Adrenal gland (tissue), 19 donors: ENCODE measurements at regions of chr18 and their contacts with region 1.

Region 1: DNA sequence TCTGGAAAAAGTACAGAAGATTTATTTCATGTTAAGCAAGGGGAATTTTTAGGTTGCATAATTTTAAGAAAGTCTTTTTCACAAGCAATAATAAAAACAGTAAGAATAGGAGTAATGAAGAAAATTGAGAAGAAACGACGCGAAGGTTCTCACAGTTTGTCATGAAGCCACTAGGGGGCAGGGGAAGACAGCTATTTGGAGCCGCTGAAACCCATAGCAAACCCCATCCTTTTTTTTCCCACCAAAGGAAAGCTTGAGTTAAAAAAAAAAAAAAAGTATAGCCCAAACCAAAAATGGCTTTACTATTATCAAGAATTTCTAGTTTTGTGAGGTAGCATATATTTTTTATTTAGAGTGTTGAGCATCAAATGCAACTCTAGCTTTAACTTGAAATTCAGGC is 300.9 kb downstream of the PHLPP1 start:
- DNase-seq: peak; percentile 34 to 79 (median 44)
- H3K4me3 ChIP-seq: no peak overlapping the region
- H3K27ac ChIP-seq: no peak overlapping the region
- H3K4me1 ChIP-seq: no peaks in the 10 kb centered on the region
- H3K27me3 ChIP-seq: no peaks in the 10 kb centered on the region
- CTCF ChIP-seq: peak; percentile 62 to 86 (median 82)
- POLR2A ChIP-seq: no peak

Region 2: GRCh38 chr18:61225336-61225735 is 1790.9 kb before region 1 on chr18:
- intact Hi-C with region 1: no loop called
- DNase-seq: no peak
- H3K4me3 ChIP-seq: no peak overlapping the region
- H3K27ac ChIP-seq: no peak overlapping the region
- H3K4me1 ChIP-seq: no peaks in the 10 kb centered on the region
- H3K27me3 ChIP-seq: no peaks in the 10 kb centered on the region
- CTCF ChIP-seq: no peak
- POLR2A ChIP-seq: no peak

Region 3: DNA sequence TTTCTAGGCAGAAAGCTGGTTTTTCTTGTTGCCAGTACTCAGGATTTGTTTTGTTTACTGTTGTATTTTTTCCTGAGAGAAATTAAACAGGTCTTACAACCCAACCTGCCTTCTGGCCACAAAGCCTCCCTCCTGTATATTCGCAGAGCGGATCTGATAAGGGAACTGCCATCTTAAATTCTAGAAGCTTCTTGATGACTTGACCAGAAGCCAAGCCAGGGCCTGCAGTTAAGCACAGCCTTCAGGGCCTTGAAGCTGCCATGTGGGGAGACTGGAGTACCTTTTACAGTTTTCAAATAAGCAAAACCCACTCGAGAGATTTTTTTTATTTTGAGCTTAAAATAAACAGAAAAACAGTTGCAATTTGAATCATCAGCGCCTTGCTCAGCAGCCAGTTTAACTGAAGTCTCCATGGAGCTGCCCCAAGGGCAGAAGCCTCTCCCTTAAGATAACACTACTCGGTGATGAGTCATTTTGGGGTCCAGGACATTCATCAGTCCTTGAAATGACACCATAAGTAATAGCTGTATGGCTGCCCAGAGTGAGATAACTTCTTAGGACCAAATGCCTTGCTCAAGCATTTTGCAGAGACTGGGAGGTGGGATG is 352.4 kb before region 1 on chr18:
- intact Hi-C with region 1: no loop called
- DNase-seq: peak; percentile 60 to 84 (median 79)
- H3K4me3 ChIP-seq: no peak overlapping the region
- H3K27ac ChIP-seq: peak overlapping the region in 3 of 5 donors; percentile 36 to 79 (median 53)
- H3K4me1 ChIP-seq: peaks cover 0 to 16% of the 10 kb centered on the region in 2 donors
- H3K27me3 ChIP-seq: no peaks in the 10 kb centered on the region
- CTCF ChIP-seq: no peak
- POLR2A ChIP-seq: no peak

Region 4: GRCh38 chr18:63155169-63155852 is 139.0 kb after region 1 on chr18:
- intact Hi-C with region 1: loop called in 1 of 2 experiments (anchors 10 kb)
- DNase-seq: peak; percentile 50 to 87 (median 66)
- H3K4me3 ChIP-seq: no peak overlapping the region
- H3K27ac ChIP-seq: no peak overlapping the region
- H3K4me1 ChIP-seq: no peaks in the 10 kb centered on the region
- H3K27me3 ChIP-seq: no peaks in the 10 kb centered on the region
- CTCF ChIP-seq: peak; percentile 43 to 81 (median 72)
- POLR2A ChIP-seq: no peak

Region 5: DNA sequence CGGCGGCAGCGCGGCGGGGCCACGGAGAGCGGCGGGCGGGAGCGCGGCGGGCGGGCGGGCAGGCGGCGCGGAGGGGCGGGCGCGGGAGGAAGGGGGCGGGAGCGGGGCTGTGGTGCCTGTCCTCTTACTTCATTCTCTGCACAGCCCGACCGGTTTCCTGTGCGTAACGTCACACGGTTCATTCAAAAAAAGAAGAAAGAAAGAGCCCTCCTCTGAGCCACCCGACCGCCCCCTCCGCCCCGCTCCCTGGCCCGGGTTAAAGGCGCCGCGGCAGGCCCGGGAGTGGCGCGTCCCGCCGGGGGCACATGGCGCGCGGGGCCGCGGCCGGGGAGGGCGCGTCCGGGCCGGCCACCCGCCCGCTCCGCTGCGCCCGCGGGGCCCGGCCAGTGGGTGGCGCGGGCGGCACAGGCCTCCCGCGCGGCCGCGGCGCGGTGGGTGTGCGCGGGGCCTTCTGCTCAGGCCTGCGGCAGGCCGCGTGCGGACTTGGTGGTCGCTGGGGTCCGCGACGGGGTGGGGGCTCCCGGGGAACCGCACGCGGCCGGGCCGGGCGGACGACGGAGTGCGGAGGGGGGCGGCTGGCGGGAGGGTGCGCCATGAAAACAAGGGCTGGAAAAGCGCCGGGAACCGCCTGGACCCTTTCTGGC is 303.9 kb after region 1 on chr18:
- intact Hi-C with region 1: loop called (anchors 5 to 10 kb)
- DNase-seq: peak; percentile 70 to 87 (median 78)
- H3K4me3 ChIP-seq: peak overlapping the region in 2 of 4 donors; percentile 21 to 78
- H3K27ac ChIP-seq: peak overlapping the region in 3 of 5 donors; percentile 53 to 87 (median 65)
- H3K4me1 ChIP-seq: peaks cover 0 to 4% of the 10 kb centered on the region in 2 donors
- H3K27me3 ChIP-seq: peaks cover 5% of the 10 kb centered on the region
- CTCF ChIP-seq: peak in 1 of 6 experiments; percentile 45
- POLR2A ChIP-seq: peak in 1 of 2 donors; percentile 32

Region 6: DNA sequence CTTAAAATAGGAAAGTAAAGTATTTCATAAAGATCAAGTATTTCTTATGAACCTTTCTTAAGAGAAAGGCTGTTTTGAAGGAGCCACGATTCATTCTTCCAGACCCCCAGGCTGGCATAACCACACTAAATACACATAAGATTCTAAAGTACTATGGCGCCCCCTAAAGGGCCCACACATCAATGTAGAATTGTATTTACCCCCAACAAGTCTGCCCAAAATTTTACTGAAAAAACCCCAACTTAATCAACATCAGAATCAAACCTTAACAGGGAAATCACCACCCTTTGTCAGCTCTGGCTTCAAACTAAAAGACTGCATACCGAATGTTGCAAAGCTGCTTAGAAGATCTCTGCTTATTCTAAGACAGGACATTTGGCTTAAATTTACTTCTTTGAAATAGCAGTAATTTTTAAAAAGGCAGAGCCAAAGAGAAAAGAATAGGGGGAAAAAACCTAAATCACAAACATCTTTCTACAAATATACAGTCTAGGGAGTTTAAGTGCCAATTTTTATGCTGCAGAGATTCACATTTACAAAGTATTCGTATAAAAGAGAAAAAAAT is 323.7 kb after region 1 on chr18:
- intact Hi-C with region 1: loop called in 1 of 2 experiments (anchors 5 kb)
- DNase-seq: peak in 2 of 7 donors; percentile 32 to 47
- H3K4me3 ChIP-seq: no peak overlapping the region
- H3K27ac ChIP-seq: no peak overlapping the region
- H3K4me1 ChIP-seq: peaks cover 4 to 6% of the 10 kb centered on the region in 2 donors
- H3K27me3 ChIP-seq: no peaks in the 10 kb centered on the region
- CTCF ChIP-seq: peak in 5 of 6 experiments; percentile 13 to 50 (median 32)
- POLR2A ChIP-seq: no peak

Region 7: DNA sequence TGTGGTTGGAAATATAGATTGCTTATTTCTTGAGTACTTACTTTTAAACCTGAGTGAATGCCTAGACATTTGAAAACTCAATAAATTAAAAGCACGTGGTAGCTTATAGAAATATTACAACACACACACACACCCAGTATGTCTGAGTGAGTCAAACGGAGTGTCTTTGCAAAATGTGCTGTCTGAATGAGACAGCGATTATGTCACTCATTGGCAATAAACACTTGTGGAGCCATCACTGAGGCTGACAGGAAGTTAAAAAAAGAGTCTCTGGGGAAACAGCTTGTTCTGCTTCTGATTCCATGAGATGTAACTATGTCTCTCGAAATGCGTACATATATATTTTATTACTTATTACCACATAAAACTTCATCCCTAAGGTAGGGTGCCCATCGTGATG is 428.3 kb after region 1 on chr18:
- intact Hi-C with region 1: loop called in 1 of 2 experiments (anchors 5 kb)
- DNase-seq: no peak
- H3K4me3 ChIP-seq: no peak overlapping the region
- H3K27ac ChIP-seq: peak overlapping the region in 1 of 5 donors; percentile 49
- H3K4me1 ChIP-seq: no peaks in the 10 kb centered on the region
- H3K27me3 ChIP-seq: peaks cover 3% of the 10 kb centered on the region
- CTCF ChIP-seq: no peak
- POLR2A ChIP-seq: no peak